H1 (cell line): ENCODE measurements at regions of chr17 and their contacts with region 1.

Region 1: DNA sequence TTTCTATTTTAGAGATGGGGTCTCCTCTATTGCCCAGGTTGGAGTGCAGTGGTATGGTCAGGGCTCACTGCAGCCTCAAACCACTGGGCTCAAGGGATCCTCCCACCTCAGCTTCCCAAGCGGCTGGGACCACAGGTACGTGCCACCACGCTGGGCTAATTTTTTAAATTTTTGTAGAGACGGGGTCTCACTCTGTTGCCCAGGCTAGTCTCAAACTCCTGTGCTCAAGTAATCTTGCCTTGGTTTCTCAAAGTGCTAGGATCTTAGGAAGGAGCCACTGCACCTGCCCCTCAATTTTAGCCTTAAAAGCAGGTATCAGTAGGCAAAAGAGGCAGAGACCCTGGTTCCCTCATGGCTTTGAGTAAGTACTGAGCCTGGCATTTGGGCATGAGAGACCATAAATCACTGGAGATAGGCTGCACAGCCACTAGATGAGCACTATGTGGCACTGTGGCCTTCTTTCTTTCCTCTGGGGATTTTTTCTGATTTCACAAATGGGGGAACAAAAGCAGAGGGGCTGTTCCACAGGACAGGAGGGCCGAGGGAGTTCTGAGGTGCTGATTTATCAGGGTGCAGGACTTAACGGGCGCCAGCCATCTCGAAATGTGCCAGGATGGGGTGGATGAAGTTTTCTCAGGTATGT is 82.2 kb downstream of the PLXDC1 start:
- DNase-seq: no peak
- H3K4me3 ChIP-seq: no peak overlapping the region
- H3K27ac ChIP-seq: no peak overlapping the region
- H3K4me1 ChIP-seq: peaks cover 0 to 10% (median 4%) of the 10 kb centered on the region in 4 experiments; a peak in 5 of 7 replicates
- H3K27me3 ChIP-seq: no peaks in the 10 kb centered on the region
- CTCF ChIP-seq: peak; percentile 26 to 85 (median 69)
- EP300 ChIP-seq: no peak
- POLR2A ChIP-seq: no peak
- RAD21 ChIP-seq: peak; percentile 72 to 82

Region 2: GRCh38 chr17:38898812-38899348 is 170.4 kb before region 1 on chr17:
- CTCF ChIA-PET with region 1: no interaction called
- POLR2A ChIA-PET with region 1: no interaction called
- DNase-seq: no peak
- H3K4me3 ChIP-seq: no peak overlapping the region
- H3K27ac ChIP-seq: no peak overlapping the region
- H3K4me1 ChIP-seq: peaks cover 0 to 5% (median 4%) of the 10 kb centered on the region in 4 experiments; a peak in 5 of 7 replicates
- H3K27me3 ChIP-seq: no peaks in the 10 kb centered on the region
- CTCF ChIP-seq: no peak
- EP300 ChIP-seq: no peak
- POLR2A ChIP-seq: no peak
- RAD21 ChIP-seq: no peak

Region 3: DNA sequence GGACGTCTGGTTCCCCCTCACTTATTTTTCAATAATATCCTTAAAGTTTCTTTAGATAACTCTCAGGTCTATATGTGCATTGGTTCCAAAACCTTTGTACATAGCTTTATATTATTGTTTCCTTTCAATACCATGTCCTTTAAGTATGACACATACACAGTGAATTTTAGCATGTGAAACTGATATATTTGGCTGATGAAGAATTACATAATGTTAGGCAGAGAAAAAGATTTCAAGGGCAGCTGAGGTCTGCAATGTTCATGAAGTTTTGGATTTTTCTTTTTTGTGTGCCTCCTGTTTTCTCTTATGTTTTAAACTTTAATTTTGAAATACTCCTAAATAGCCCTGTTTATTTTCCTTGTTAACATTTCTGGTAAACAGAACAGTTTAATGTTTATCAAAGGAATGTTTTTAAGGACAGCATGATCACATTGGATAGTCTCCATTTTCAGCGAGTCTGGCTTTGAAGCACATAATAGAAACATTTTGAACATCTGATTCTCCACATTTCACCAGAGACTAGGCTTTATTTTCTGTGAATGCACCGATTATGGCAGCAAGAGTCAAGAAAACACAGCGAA is 69.1 kb before region 1 on chr17:
- CTCF ChIA-PET with region 1: no interaction called
- POLR2A ChIA-PET with region 1: no interaction called
- DNase-seq: no peak
- H3K4me3 ChIP-seq: no peak overlapping the region
- H3K27ac ChIP-seq: no peak overlapping the region
- H3K4me1 ChIP-seq: no peaks in the 10 kb centered on the region; a peak in 1 of 7 replicates
- H3K27me3 ChIP-seq: no peaks in the 10 kb centered on the region
- CTCF ChIP-seq: no peak
- EP300 ChIP-seq: no peak
- POLR2A ChIP-seq: no peak
- RAD21 ChIP-seq: no peak

Region 4: GRCh38 chr17:39045948-39046679 is 23.1 kb before region 1 on chr17:
- CTCF ChIA-PET with region 1: interaction called, 31 read pairs
- POLR2A ChIA-PET with region 1: interaction called, 8 read pairs
- DNase-seq: peak in 1 of 2 experiments; percentile 78
- H3K4me3 ChIP-seq: no peak overlapping the region
- H3K27ac ChIP-seq: peak overlapping the region; percentile 97
- H3K4me1 ChIP-seq: peaks cover 0 to 5% (median 0%) of the 10 kb centered on the region in 4 experiments; a peak in 4 of 7 replicates
- H3K27me3 ChIP-seq: no peaks in the 10 kb centered on the region
- CTCF ChIP-seq: peak; percentile 72 to 90 (median 77)
- EP300 ChIP-seq: no peak
- POLR2A ChIP-seq: peak in 1 of 2 experiments; percentile 63; a peak in 1 of 3 replicates
- RAD21 ChIP-seq: peak; percentile 42 to 65; a peak in 3 of 4 replicates

Region 5: DNA sequence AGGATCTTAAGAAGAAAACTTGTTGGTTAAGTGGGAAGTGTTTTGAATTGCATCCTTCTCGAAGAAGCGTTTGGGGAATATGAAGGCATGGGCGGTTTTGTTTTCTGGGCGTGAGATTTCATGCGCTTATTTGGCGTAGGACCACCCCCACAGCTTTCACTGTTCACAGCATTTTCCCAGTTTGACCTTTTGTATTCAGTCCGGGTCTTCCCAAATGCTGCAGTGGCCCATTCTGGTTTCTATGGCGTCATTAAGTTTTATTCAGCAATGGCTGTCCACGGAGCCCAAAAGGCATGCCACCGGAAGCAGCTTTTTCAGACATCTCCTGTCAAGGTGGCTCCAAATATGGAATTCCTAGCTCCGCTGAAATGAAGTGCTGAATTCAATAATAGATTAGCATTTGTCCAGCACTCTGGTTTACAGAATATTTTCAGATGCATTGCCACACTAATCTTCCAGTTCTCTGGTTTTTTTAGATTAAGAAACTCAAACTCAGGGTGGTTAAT is 11.5 kb before region 1 on chr17:
- CTCF ChIA-PET with region 1: interaction called, 10 read pairs
- POLR2A ChIA-PET with region 1: interaction called, 6 read pairs
- DNase-seq: peak in 1 of 2 experiments; percentile 11
- H3K4me3 ChIP-seq: peak overlapping the region in 3 of 4 experiments; percentile 61 to 84 (median 64); a peak in 5 of 8 replicates
- H3K27ac ChIP-seq: no peak overlapping the region
- H3K4me1 ChIP-seq: peaks cover 0 to 4% (median 3%) of the 10 kb centered on the region in 4 experiments; a peak in 5 of 7 replicates
- H3K27me3 ChIP-seq: no peaks in the 10 kb centered on the region
- CTCF ChIP-seq: no peak
- EP300 ChIP-seq: no peak
- POLR2A ChIP-seq: no peak
- RAD21 ChIP-seq: no peak

Region 6: GRCh38 chr17:39080421-39081078 is 11.3 kb after region 1 on chr17:
- CTCF ChIA-PET with region 1: interaction called, 15 read pairs
- POLR2A ChIA-PET with region 1: interaction called, 4 read pairs
- DNase-seq: no peak
- H3K4me3 ChIP-seq: peak overlapping the region in 2 of 4 experiments; percentile 7 to 9; a peak in 3 of 8 replicates
- H3K27ac ChIP-seq: no peak overlapping the region
- H3K4me1 ChIP-seq: peaks cover 4 to 16% (median 7%) of the 10 kb centered on the region in 4 experiments
- H3K27me3 ChIP-seq: no peaks in the 10 kb centered on the region
- CTCF ChIP-seq: no peak
- EP300 ChIP-seq: no peak
- POLR2A ChIP-seq: no peak
- RAD21 ChIP-seq: no peak

Region 7: GRCh38 chr17:39094607-39095308 is 25.5 kb after region 1 on chr17:
- CTCF ChIA-PET with region 1: interaction called, 13 read pairs
- POLR2A ChIA-PET with region 1: no interaction called
- DNase-seq: no peak
- H3K4me3 ChIP-seq: no peak overlapping the region
- H3K27ac ChIP-seq: no peak overlapping the region
- H3K4me1 ChIP-seq: peaks cover 0 to 3% (median 2%) of the 10 kb centered on the region in 4 experiments; a peak in 2 of 7 replicates
- H3K27me3 ChIP-seq: no peaks in the 10 kb centered on the region
- CTCF ChIP-seq: no peak
- EP300 ChIP-seq: no peak
- POLR2A ChIP-seq: no peak
- RAD21 ChIP-seq: no peak

Region 8: GRCh38 chr17:39144416-39144840 is 75.2 kb after region 1 on chr17:
- CTCF ChIA-PET with region 1: interaction called, 13 read pairs
- POLR2A ChIA-PET with region 1: interaction called, 3 read pairs
- DNase-seq: no peak
- H3K4me3 ChIP-seq: no peak overlapping the region
- H3K27ac ChIP-seq: no peak overlapping the region
- H3K4me1 ChIP-seq: 0 out of 7 replicates have a peak, but pooled peaks cover 0 to 4% (median 0%) of the 10 kb centered on the region in 4 experiments
- H3K27me3 ChIP-seq: no peaks in the 10 kb centered on the region
- CTCF ChIP-seq: no peak
- EP300 ChIP-seq: no peak
- POLR2A ChIP-seq: no peak
- RAD21 ChIP-seq: no peak